ENCODE measurements at regions of chr12 and their contacts with region 1.

Region 1: GRCh38 chr12:104687823-104688573 is 231.2 kb downstream of the CHST11 start:
- DNase-seq: peak in 31 of 35 experiments; percentile 16 to 71 (median 50)
- ATAC-seq: peak; percentile 46 to 74 (median 56)
- H3K4me3 ChIP-seq: no peak overlapping the region
- H3K4me3 Mint-ChIP-seq: peak overlapping the region; percentile 30 to 61 (median 34)
- H3K27ac ChIP-seq: peak overlapping the region; percentile 18
- H3K27ac Mint-ChIP-seq: peak overlapping the region; percentile 59 to 84
- H3K4me1 ChIP-seq: peaks cover 7 to 72% of the 10 kb centered on the region in 2 experiments
- H3K4me1 Mint-ChIP-seq: peaks cover 59 to 84% (median 68%) of the 10 kb centered on the region in 3 donors
- H3K27me3 ChIP-seq: no peaks in the 10 kb centered on the region
- H3K27me3 Mint-ChIP-seq: no peaks in the 10 kb centered on the region

Region 2: GRCh38 chr12:103318533-103318932 is 1369.5 kb before region 1 on chr12:
- CTCF ChIA-PET with region 1: no interaction called
- POLR2A ChIA-PET with region 1: no interaction called
- DNase-seq: no peak
- ATAC-seq: no peak
- H3K4me3 ChIP-seq: no peak overlapping the region
- H3K4me3 Mint-ChIP-seq: no peak overlapping the region
- H3K27ac ChIP-seq: no peak overlapping the region
- H3K27ac Mint-ChIP-seq: no peak overlapping the region
- H3K4me1 ChIP-seq: no peaks in the 10 kb centered on the region
- H3K4me1 Mint-ChIP-seq: no peaks in the 10 kb centered on the region
- H3K27me3 ChIP-seq: no peaks in the 10 kb centered on the region
- H3K27me3 Mint-ChIP-seq: peaks cover 0 to 3% of the 10 kb centered on the region in 2 donors

Region 3: DNA sequence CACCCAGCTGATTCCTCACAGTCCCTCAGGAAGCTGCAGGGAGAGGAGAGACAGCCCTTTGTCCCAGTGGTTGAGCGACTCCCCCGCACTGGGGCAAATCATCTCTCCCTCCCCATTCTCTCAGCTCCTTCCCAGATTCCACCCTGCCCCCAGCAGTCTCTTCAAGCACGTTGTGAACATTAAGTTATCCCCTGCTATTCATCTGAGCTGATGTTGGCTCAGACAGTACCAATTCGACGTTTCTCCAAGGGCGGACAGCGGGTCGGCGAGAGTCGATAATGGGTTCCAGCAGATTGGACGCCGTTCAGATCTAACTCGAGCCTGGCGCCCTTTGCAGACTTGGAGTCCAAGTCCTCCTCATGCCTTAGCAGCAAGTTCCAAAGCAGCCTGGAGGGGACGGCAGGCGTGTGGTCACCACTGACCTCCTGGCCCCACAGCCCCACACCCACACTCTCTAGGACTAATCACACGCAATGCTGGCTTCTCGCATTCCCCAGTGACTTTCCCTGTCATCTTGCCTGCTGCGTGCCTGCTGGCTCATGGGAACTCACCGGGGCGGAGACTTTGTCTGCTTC is 14.7 kb after region 1 on chr12:
- CTCF ChIA-PET with region 1: no interaction called
- POLR2A ChIA-PET with region 1: no interaction called
- DNase-seq: no peak
- ATAC-seq: no peak
- H3K4me3 ChIP-seq: no peak overlapping the region
- H3K4me3 Mint-ChIP-seq: no peak overlapping the region
- H3K27ac ChIP-seq: no peak overlapping the region
- H3K27ac Mint-ChIP-seq: no peak overlapping the region
- H3K4me1 ChIP-seq: peaks cover 0 to 13% of the 10 kb centered on the region in 2 experiments
- H3K4me1 Mint-ChIP-seq: peaks cover 16 to 56% (median 51%) of the 10 kb centered on the region in 3 donors
- H3K27me3 ChIP-seq: no peaks in the 10 kb centered on the region
- H3K27me3 Mint-ChIP-seq: no peaks in the 10 kb centered on the region

Region 4: GRCh38 chr12:104720339-104721038 is 32.5 kb after region 1 on chr12:
- CTCF ChIA-PET with region 1: interaction called in 1 of 2 experiments, 3 read pairs
- POLR2A ChIA-PET with region 1: interaction called, 4 to 12 read pairs
- DNase-seq: peak; percentile 42 to 90 (median 74)
- ATAC-seq: peak; percentile 72 to 81 (median 78)
- H3K4me3 ChIP-seq: peak overlapping the region; percentile 55 to 60
- H3K4me3 Mint-ChIP-seq: peak overlapping the region; percentile 74 to 80 (median 77)
- H3K27ac ChIP-seq: peak overlapping the region; percentile 93
- H3K27ac Mint-ChIP-seq: peak overlapping the region; percentile 90 to 93
- H3K4me1 ChIP-seq: peaks cover 11 to 61% of the 10 kb centered on the region in 2 experiments
- H3K4me1 Mint-ChIP-seq: peaks cover 54 to 76% (median 71%) of the 10 kb centered on the region in 3 donors
- H3K27me3 ChIP-seq: no peaks in the 10 kb centered on the region
- H3K27me3 Mint-ChIP-seq: no peaks in the 10 kb centered on the region